ENCODE measurements at regions of chr1 and their contacts with region 1.

Region 1: GRCh38 chr1:150149271-150150132 is at the start of gene PLEKHO1:
- DNase-seq: peak; percentile 88
- H3K4me3 ChIP-seq: peak within 1 kb of the TSS; percentile 96
- H3K27ac ChIP-seq: peak within 1 kb of the TSS; percentile 96
- H3K4me1 ChIP-seq: peaks cover 23% of the 10 kb centered on the region
- H3K27me3 ChIP-seq: no peaks in the 10 kb centered on the region
- CTCF ChIP-seq: no peak
- total RNA-seq, gene PLEKHO1: 67.2 and 73.1 TPM in 2 replicates

Region 2: GRCh38 chr1:150186789-150187559 is 37.5 kb after region 1 on chr1:
- CTCF ChIA-PET with region 1: no interaction called
- POLR2A ChIA-PET with region 1: interaction called, 11 read pairs
- intact Hi-C with region 1: no loop called
- DNase-seq: peak; percentile 79
- H3K4me3 ChIP-seq: no peak overlapping the region
- H3K27ac ChIP-seq: no peak overlapping the region
- H3K4me1 ChIP-seq: peaks cover 12% of the 10 kb centered on the region
- H3K27me3 ChIP-seq: no peaks in the 10 kb centered on the region
- CTCF ChIP-seq: peak; percentile 71

Measured in A673 (cell line).